ENCODE measurements at regions of chrX and their contacts with region 1.

Region 1: DNA sequence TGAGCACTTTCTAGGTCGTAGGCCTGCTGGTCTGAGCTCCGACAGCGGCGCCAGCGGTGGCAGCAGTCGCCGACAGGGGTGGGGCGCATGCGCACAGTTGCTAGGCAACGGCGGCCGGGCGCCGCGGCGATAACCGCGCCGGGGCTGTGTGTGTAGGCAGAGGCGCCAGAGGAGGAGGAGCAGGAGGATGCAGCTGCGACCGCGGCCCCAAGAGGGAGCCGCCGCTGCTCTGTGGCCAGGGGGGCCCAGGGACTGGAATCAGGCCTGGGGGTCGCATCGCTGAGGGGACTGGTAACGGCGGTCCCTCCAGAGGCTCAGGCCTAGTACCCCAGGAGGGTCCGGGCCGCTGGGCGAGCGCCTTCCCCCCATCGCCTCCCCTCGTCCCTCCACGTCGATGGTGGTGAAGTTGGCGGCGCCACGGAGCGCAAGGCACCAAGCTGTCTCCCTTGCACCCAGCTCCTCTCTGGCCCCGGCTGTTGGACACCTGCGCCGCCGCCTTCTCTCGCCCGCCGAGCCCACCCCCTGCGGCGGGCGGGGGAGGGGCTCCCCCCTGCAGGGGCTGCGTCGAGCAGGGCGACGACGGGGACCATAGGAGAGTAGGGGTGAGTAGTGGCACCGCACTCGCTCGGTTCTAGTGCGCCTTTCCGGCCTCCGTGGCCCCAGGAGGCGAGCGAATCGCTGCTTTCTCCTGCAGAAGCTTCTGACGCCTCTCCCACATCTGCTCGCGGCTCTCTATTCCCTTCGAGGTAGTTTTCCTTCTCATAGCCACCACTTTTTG is 58.6 kb upstream of the ZC4H2 start:
- DNase-seq: peak; percentile 47
- ATAC-seq: peak; percentile 97
- H3K4me3 ChIP-seq: peak within 1 kb of the TSS; percentile 54 to 60
- H3K27ac ChIP-seq: peak within 1 kb of the TSS; percentile 52; the same call in 1 of the 2 replicates
- H3K4me1 ChIP-seq: peaks cover 2 to 3% of the 10 kb centered on the region in 2 experiments; a peak in 1 of 4 replicates
- H3K27me3 ChIP-seq: no peaks in the 10 kb centered on the region
- CTCF ChIP-seq: peak in 2 of 3 experiments; percentile 37 to 40; a peak in 4 of 6 replicates
- POLR2A ChIP-seq: no peak
- RAD21 ChIP-seq: no peak; the same call in 1 of the 2 replicates

Region 2: GRCh38 chrX:64975989-64976672 is 58.7 kb before region 1 on chrX and contains the start of gene ZC4H2:
- CTCF ChIA-PET with region 1: no interaction called
- POLR2A ChIA-PET with region 1: interaction called, 3 read pairs
- RAD21 ChIA-PET with region 1: no interaction called
- intact Hi-C with region 1: loop called (anchors 5 kb)
- DNase-seq: peak; percentile 54
- ATAC-seq: peak; percentile 99
- H3K4me3 ChIP-seq: peak within 1 kb of the TSS; percentile 62 to 70
- H3K27ac ChIP-seq: peak within 1 kb of the TSS; percentile 17; the same call in 1 of the 2 replicates
- H3K4me1 ChIP-seq: peaks cover 0 to 14% of the 10 kb centered on the region in 2 experiments; a peak in 2 of 4 replicates
- H3K27me3 ChIP-seq: no peaks in the 10 kb centered on the region
- CTCF ChIP-seq: no peak
- POLR2A ChIP-seq: no peak
- RAD21 ChIP-seq: no peak
- total RNA-seq, gene ZC4H2: 8.8 TPM

Region 3: DNA sequence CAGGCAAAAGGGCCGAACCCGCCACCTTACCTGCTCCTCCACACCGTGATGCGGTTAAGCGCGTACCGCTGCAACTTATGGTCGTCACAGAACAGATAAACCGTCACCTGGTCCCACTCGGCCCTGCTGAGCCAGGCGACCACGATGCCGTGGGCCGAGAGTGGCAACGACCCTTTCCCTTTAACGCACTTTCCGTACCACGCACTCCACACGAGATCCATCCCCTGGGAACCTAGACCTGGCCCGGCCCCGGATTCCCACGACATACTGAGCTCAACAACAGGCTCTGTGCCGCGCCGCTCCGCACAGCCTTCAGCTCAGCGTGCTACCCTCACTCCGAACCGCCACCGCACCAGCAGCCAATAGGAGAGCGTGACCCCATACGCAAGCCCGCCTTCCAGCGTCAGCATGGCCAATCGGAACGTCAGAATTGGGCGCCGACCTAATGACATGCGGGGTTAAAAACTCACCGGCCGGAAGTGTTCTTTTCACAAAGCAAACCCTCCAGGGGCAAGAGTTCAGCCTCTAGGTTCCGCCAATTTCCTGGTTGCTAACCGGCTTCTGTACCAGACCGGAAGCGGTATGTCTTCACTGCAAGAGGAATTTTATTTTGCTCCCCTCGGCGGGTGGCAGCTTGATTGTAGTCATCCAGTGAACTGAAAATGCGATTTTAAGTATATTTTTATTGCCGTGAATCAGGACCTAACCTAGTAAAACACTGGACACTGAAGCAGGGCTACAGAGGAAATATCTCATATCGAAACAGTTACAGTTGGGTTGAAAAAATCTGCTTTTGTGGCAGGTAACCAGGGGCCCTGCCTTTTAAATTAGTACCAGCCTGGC is 499.8 kb after region 1 on chrX and contains the start of gene LAS1L:
- CTCF ChIA-PET with region 1: no interaction called
- POLR2A ChIA-PET with region 1: no interaction called
- RAD21 ChIA-PET with region 1: no interaction called
- intact Hi-C with region 1: loop called (anchors 10 kb)
- DNase-seq: peak; percentile 90
- ATAC-seq: peak; percentile 98
- H3K4me3 ChIP-seq: peak within 1 kb of the TSS; percentile 84 to 90
- H3K27ac ChIP-seq: peak within 1 kb of the TSS; percentile 53
- H3K4me1 ChIP-seq: peaks cover 3 to 15% of the 10 kb centered on the region in 2 experiments; a peak in 2 of 4 replicates
- H3K27me3 ChIP-seq: no peaks in the 10 kb centered on the region
- CTCF ChIP-seq: no peak
- POLR2A ChIP-seq: no peak
- RAD21 ChIP-seq: no peak
- total RNA-seq, gene LAS1L: 47.7 TPM

Measured in HCT116 (cell line).